ENCODE measurements at regions of chr14 and their contacts with region 1.

Region 1: DNA sequence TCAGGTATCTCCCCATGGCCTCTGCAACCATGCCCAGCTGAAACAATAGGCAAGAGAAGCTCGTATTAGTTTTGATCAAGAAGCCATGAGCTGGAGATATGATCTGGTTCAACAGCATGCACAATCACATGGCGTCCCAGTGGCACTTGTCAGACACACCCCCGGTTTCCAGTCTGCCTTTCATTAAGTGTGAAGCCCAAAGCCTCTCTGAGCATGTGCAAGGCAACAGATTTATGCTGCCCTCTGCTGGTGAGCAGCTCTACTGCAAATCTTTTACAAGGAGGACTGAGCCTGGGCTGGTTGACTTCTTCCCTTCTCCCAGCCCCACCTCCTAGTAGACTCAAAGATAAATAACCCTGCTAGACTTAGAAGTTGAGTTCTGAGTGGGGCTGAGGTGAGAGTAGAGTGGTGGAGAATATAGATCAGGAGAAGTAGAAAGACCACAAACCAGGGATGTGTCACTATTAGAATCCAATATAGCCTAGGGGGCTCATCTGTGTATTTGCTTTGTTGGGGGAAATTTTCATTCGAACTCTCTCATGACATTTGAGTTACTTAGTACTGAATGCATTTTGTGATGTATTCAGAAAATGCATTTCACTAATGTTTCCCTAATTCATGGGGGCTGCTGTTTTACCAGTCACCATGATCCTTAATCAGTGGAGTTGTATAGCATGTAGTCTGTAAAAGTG is 53.7 kb upstream of the MBIP start:
- DNase-seq: peak; percentile 60
- CTCF ChIP-seq: peak; percentile 94

Region 2: GRCh38 chr14:35883677-35884293 is 490.3 kb before region 1 on chr14:
- CTCF ChIA-PET with region 1: interaction called, 16 read pairs
- POLR2A ChIA-PET with region 1: no interaction called
- DNase-seq: peak; percentile 39
- CTCF ChIP-seq: peak; percentile 67

Region 3: DNA sequence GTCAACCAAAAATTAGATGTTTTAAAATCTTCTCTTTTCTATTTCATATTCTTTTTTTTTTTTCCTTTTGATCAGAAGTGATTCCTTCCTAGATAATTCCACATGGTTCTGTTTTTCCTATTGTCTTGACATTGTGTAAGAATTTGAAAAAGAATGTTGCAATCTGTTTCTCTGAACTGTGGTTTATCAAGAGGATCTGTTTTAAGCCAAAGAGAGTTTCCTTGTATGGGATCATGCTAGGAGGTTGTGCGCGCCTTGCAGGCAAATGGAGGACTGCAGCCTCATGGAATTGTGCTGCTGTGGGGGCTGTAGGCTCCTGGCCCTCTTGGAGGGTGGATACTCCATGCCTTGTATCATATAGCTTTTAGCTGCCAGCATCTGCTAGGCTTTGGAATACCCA is 10.4 kb before region 1 on chr14:
- CTCF ChIA-PET with region 1: interaction called, 18 read pairs
- POLR2A ChIA-PET with region 1: no interaction called
- DNase-seq: no peak
- CTCF ChIP-seq: no peak

Region 4: GRCh38 chr14:36394593-36394992 is 20.5 kb after region 1 on chr14:
- CTCF ChIA-PET with region 1: interaction called, 20 read pairs
- POLR2A ChIA-PET with region 1: no interaction called
- DNase-seq: no peak
- CTCF ChIP-seq: no peak

Region 5: DNA sequence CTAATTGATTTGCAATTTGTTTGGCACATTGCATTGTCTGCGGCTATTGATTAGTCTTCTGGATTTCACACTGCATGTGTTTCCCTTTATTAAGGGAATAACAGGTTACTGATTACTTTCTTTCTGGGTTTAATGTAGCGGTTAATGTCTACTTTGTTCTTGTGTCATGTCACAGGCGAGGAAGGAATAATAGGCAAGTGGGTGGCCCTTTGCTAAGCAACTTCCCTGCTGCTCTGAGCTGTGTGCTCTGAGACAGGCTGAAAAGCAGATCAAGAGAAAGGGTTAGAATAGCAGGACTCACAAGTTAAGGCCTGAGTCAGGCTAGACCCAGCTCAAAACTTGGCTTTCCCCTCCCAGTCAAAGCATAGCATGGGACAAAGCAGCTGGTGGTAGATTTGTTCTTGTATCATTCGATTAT is 68.7 kb after region 1 on chr14:
- CTCF ChIA-PET with region 1: no interaction called
- POLR2A ChIA-PET with region 1: no interaction called
- DNase-seq: no peak
- CTCF ChIP-seq: no peak